T-cell (primary cell): ENCODE measurements at regions of chr6 and their contacts with region 1.

Region 1: DNA sequence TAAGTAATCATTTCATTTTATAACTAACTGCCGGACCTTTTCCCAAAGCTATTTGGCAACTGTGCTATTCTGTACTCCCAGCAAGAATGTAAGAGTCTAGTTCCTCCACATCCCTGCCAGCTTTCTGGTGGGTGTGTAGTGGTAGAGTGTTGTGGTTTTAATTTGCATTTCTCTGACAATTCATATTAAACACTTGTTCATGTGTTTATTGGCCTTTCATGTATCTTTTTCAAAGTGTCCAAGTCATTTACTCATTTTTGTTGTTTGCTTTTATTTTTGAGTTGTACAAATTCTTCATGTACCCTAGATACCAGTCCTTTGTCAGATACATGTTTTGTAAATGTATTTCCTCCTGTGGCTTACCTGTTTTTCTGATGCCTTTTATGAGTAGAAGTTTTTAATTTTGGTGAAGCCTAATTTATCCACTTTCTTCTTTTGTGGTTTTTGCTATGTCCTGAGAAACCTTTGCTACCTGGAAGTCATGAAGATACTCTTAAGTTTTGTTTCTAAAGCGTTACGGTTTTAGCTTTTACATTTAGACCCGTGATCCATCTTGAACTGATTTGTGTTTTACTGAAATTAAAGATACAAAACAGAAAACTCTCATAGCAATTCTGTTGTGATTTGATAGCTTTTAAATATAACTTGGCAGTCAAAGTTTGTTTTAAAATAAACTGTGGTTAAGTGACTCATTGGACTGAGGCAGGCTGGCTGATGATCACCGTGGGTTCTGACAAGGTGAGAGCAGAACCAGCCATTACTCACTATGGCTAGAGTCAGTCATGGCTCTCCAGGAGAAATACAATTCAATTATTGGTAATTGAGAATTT is 8.0 kb downstream of the MYLIP start:
- DNase-seq: peak in 9 of 35 experiments; percentile 12 to 52 (median 20)
- ATAC-seq: peak; percentile 43 to 84 (median 75)
- H3K4me3 ChIP-seq: no peak overlapping the region
- H3K4me3 Mint-ChIP-seq: peak overlapping the region; percentile 59 to 94 (median 68)
- H3K27ac ChIP-seq: peak overlapping the region; percentile 36
- H3K27ac Mint-ChIP-seq: peak overlapping the region; percentile 80 to 83
- H3K4me1 ChIP-seq: peaks cover 41 to 49% of the 10 kb centered on the region in 2 experiments
- H3K4me1 Mint-ChIP-seq: peaks cover 93 to 95% (median 94%) of the 10 kb centered on the region in 3 donors
- H3K27me3 ChIP-seq: no peaks in the 10 kb centered on the region
- H3K27me3 Mint-ChIP-seq: no peaks in the 10 kb centered on the region

Region 2: DNA sequence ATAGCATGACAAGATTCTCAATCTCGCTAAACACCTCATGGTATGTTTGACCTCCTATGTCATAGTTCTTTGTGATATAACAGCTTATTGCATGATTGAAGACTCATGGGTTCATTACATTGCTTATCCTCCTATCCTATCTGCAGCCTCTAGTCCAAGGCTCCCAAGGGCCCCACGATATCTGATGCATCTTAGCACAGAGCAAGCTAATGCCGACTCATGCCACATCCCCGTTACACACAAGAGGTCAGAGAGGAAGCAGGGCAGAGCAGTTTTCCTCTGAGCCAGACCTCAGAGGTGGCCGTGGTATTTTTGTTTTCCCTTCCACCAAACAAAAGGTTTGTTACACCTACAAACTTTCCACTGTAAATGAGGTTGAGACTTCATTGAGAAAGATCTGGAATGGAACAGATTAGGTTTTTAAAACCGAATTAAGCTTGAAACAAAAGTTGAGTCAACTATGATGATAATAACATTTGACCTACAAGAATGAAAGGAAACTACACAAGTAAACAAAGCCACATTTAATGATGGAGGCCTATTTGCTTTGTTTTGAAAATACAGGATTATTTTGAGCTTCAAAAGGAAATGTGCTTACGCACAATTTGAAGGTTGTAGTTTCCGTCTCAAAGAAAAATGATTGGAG is 141.9 kb before region 1 on chr6:
- CTCF ChIA-PET with region 1: no interaction called
- POLR2A ChIA-PET with region 1: interaction called, 3 to 10 read pairs
- DNase-seq: no peak
- ATAC-seq: no peak
- H3K4me3 ChIP-seq: no peak overlapping the region
- H3K4me3 Mint-ChIP-seq: no peak overlapping the region
- H3K27ac ChIP-seq: no peak overlapping the region
- H3K27ac Mint-ChIP-seq: no peak overlapping the region
- H3K4me1 ChIP-seq: peaks cover 0 to 15% of the 10 kb centered on the region in 2 experiments
- H3K4me1 Mint-ChIP-seq: peaks cover 0 to 8% (median 4%) of the 10 kb centered on the region in 3 donors
- H3K27me3 ChIP-seq: peaks cover 0 to 3% of the 10 kb centered on the region in 2 experiments
- H3K27me3 Mint-ChIP-seq: peaks cover 5 to 8% of the 10 kb centered on the region in 2 donors

Region 3: DNA sequence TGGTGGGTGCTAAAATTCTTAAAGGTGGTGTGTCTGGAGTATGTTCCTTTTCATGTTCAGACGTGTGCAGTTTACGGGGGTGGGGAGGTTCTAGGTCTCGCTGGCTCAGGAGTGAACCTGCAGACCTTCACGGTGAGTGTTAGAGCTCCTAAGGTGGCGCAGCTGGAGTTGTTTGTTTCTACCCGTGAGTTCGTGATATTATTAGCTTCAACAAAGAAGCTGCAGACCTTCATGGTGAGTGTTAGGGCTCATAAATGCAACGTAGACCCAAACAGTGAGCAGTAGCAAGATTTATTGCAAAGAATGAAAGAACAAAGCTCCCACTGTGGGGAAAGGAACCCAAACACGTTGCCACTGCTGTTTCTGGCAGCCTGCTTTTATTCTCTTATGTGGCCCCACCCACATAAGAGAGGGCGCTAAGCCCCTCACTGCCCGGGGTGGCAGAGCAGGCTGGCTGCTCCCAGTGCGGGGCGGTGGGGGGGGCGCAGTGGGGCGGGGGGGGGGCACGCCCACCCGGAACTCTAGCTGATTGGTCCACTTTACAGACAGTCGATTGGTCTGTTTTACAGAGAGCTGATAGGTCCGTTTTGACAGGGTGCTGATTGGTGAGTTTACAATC is 60.2 kb after region 1 on chr6:
- CTCF ChIA-PET with region 1: no interaction called
- POLR2A ChIA-PET with region 1: no interaction called
- DNase-seq: no peak
- ATAC-seq: no peak
- H3K4me3 ChIP-seq: no peak overlapping the region
- H3K4me3 Mint-ChIP-seq: no peak overlapping the region
- H3K27ac ChIP-seq: no peak overlapping the region
- H3K27ac Mint-ChIP-seq: no peak overlapping the region
- H3K4me1 ChIP-seq: no peaks in the 10 kb centered on the region
- H3K4me1 Mint-ChIP-seq: no peaks in the 10 kb centered on the region
- H3K27me3 ChIP-seq: peaks cover 0 to 26% of the 10 kb centered on the region in 2 experiments
- H3K27me3 Mint-ChIP-seq: peaks cover 14 to 29% of the 10 kb centered on the region in 2 donors